Left ventricle myocardium inferior (tissue), 1 donor: ENCODE measurements at regions of chr11 and their contacts with region 1.

Region 1: DNA sequence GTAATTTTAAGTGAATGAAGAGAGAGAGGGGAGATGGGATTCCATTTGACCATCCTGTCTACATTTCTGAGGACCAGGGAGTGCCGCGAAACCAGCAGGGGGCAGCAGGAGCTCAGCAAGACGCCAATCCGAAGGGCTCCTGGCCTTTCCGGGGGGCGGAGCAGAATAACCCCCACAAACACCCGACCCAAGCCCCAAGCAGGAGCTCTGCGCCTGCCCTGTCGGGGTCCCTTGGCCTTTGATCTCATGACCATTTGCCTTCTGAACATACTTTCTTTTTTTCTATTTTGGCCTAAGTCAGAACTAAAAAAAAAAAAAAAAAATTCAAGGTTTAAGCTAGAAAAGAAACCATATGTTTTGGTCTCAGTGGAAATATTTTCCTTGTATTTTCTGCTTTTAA is 21.9 kb upstream of the SCN2B start:
- DNase-seq: peak; percentile 84
- H3K4me3 ChIP-seq: peak overlapping the region; percentile 28
- H3K27ac ChIP-seq: peak overlapping the region; percentile 45
- H3K4me1 ChIP-seq: peaks cover 38% of the 10 kb centered on the region
- H3K27me3 ChIP-seq: no peaks in the 10 kb centered on the region
- CTCF ChIP-seq: peak; percentile 92

Region 2: DNA sequence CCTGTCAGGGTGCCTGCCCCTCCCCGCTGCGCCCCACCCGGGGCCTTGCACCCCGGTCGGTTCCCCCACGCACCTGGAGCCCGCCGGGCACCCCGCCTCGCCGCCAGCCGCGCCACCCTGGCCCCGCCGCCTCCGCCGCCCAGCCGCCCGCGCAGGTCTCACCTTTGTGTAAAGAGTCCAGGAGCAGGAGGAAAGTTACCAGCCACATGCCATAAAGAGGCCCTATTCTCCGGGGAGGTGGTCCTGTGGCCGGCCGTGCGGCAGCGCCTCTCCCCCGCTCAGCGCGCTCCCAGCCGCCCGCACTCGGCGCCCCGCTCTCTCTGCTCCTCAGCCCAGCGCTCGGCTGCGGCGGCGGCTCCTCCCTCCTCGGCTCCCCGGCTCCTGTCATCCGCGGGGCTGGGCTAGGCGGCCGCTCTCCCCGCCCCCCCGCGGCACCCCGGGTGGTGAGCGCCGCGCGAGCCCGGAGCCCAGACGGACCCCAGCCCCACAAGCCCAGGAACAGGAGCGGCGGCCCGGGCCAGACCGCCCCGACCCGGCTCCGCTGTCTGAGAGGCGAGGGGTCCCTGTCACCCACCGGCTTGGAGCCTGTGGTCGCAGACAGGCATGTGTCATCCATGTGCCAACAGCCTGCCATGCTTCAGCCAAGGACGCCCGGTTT is 401.4 kb before region 1 on chr11 and contains the start of gene DSCAML1:
- intact Hi-C with region 1: no loop called
- DNase-seq: no peak
- H3K4me3 ChIP-seq: peak within 1 kb of the TSS; percentile 60
- H3K27ac ChIP-seq: no peak within 1 kb of the TSS
- H3K4me1 ChIP-seq: peaks cover 21% of the 10 kb centered on the region
- H3K27me3 ChIP-seq: peaks cover 57% of the 10 kb centered on the region
- CTCF ChIP-seq: no peak
- total RNA-seq, gene DSCAML1: 0.19 TPM

Region 3: DNA sequence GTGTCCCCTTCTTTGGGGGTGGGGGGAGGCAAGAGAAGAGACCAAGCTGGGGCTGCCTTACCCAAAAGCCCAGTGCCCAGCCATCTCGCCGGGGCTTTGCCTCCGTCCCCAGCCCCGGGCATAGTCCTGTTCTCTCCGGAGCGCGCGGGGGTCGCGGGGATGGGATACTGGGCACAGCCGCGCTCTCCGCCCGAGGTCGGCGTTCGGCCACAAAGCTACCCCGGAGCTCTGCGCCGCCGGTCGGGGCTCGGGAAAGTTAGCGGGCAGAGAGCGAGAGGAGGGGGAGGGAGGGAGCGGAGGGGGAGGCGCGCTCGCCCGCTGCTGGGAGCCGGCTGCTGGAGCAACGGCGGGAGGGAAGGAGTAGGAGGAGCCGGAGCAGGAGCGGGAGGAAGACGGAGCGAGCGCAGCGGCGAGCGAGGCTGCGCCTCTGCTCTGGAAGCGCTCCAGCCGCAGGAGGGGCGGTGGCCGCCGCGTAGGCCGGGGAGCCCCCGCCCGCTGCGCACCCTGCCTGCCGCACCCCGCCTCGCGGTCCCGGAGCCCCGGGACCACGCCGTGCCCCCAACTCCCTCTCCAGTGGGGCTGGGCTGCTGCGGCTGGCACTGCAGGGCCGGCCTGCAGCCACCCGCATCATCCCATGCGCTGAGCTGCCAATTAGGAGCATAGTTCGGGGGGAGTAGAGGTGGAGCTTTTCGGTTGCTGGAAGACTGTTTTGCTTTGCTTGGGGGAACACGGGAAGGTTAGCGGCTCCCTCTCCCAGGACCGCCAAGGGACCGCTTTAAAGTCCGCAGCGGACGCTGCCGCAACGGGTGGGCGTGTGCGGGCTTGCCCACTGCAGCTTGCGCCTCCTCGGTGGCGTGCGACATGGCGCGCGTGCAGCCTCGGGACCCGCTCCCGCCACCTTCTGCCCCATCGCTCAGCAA is 45.6 kb before region 1 on chr11 and contains the start of gene SCN4B:
- intact Hi-C with region 1: no loop called
- DNase-seq: peak; percentile 76
- H3K4me3 ChIP-seq: peak within 1 kb of the TSS; percentile 75
- H3K27ac ChIP-seq: peak within 1 kb of the TSS; percentile 71
- H3K4me1 ChIP-seq: peaks cover 46% of the 10 kb centered on the region
- H3K27me3 ChIP-seq: peaks cover 64% of the 10 kb centered on the region
- CTCF ChIP-seq: no peak
- total RNA-seq, gene SCN4B: 12.9 TPM

Region 4: DNA sequence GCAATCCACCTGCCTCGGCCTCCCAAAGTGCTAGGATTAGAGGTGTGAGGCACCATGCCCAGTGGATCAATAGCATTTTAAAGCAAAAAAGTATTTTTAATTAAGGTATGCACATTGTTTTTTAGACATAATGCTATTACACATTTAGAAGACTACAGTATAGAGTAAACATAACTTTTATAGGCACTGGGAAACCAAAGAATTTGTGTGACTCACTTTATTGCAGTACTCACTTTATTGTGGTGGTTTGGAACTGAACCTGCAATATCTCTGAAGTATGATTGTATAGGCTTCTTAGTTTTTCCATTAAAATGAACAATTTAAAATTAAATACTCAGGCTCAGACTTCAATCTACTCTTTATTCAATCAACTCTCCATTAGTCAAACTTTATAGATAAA is 88.6 kb after region 1 on chr11:
- intact Hi-C with region 1: loop called (anchors 5 kb)
- DNase-seq: no peak
- H3K4me3 ChIP-seq: no peak overlapping the region
- H3K27ac ChIP-seq: no peak overlapping the region
- H3K4me1 ChIP-seq: no peaks in the 10 kb centered on the region
- H3K27me3 ChIP-seq: peaks cover 4% of the 10 kb centered on the region
- CTCF ChIP-seq: no peak

Region 5: DNA sequence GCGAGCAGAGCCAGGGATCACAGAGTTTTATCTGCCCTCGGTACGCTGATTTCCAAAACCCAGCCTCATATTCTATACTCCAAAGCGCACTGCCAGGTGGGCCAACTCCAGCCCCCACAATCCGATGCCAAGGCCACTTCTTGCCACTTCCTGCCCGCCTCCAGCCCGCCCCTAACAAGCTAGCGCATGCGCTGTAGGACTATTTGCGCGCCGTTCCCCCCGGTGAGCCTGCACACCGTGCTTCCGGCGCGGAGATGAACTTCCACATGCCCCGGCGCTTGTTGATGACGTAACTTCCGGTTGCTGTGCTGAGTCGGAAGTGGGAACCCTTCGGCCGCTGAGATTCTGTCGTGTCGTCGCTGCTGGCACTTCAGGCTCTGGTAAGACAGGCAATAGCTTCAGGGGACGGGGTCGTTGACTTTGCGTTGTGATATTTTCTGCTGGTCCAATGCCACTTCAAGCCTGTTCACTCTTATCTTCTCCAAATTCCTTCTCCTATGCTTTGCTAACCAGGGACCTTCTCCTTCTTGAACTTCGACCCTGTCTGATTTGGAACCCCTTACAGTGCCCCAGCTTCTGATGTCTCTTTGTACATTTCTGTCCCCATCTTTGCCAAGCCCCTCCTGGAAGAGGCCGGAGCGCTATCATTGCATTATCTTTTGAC is 161.1 kb after region 1 on chr11 and contains the start of gene UBE4A:
- intact Hi-C with region 1: loop called (anchors 10 kb)
- DNase-seq: peak; percentile 96
- H3K4me3 ChIP-seq: peak within 1 kb of the TSS; percentile 89
- H3K27ac ChIP-seq: peak within 1 kb of the TSS; percentile 76
- H3K4me1 ChIP-seq: peaks cover 42% of the 10 kb centered on the region
- H3K27me3 ChIP-seq: no peaks in the 10 kb centered on the region
- CTCF ChIP-seq: no peak
- total RNA-seq, gene UBE4A: 32.6 TPM